Motor neuron (in vitro differentiated cells): ENCODE measurements at regions of chr19 and their contacts with region 1.

Region 1: DNA sequence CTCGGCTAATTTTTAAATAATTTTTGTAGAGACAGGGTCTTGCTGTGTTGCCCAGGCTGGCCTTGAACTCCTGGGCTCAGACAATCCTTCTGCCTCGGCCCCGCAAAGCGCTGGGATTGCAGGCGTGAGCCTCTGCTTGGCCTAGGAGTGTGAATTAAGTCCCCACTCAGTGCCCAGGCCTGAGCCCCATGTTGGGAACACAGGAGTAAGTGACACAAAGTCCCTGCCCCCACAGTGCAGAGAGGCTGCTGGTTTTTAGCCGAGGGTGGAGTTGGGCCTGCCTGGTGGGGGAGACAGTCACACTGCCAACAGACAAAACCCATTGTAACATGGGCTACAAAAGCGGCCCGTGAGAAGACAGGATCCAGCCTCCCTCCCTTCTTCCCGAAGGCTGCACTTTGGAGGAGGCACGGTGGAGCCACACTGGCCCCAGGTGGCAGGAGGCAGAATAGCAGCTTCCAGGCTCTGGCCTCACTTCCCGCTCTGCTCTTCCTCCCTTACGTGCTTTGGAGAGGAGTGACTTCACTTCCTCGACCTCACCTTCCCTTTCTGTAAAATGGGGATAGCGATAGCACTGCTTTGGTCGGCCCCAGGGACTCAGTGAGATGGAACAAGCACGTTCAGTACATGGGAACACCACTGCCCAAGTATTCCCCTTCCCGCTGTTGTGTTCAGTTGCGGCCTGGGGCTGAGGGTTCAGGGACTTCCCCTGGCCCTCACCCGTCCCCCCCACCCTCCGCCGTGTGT is 15.2 kb upstream of the EHD2 start:
- ATAC-seq: peak; percentile 69 to 94 (median 73)
- H3K4me3 ChIP-seq: no peak overlapping the region
- H3K27ac ChIP-seq: peak overlapping the region in 1 of 2 donors; percentile 65
- H3K4me1 ChIP-seq: peaks cover 0 to 6% of the 10 kb centered on the region in 2 donors

Region 2: GRCh38 chr19:47428177-47428894 is 269.7 kb before region 1 on chr19:
- in situ Hi-C with region 1: loop called in 5 of 9 experiments (anchors 10 to 25 kb)
- ATAC-seq: peak; percentile 72 to 89 (median 84)
- H3K4me3 ChIP-seq: peak overlapping the region in 4 of 5 donors; percentile 2 to 24 (median 22)
- H3K27ac ChIP-seq: no peak overlapping the region
- H3K4me1 ChIP-seq: peaks cover 21 to 32% of the 10 kb centered on the region in 2 donors

Region 3: GRCh38 chr19:47436712-47437401 is 261.2 kb before region 1 on chr19:
- in situ Hi-C with region 1: loop called in 5 of 9 experiments (anchors 10 to 25 kb)
- ATAC-seq: peak; percentile 74 to 97 (median 93)
- H3K4me3 ChIP-seq: no peak overlapping the region
- H3K27ac ChIP-seq: no peak overlapping the region
- H3K4me1 ChIP-seq: peaks cover 4 to 5% of the 10 kb centered on the region in 2 donors

Region 4: GRCh38 chr19:47514869-47515588 is 183.0 kb before region 1 on chr19 and contains the start of gene NAPA:
- in situ Hi-C with region 1: loop called in 1 of 9 experiments (anchors 25 kb)
- ATAC-seq: peak; percentile 88 to 97 (median 95)
- H3K4me3 ChIP-seq: peak within 1 kb of the TSS; percentile 50 to 88 (median 83)
- H3K27ac ChIP-seq: peak within 1 kb of the TSS; percentile 91 to 96
- H3K4me1 ChIP-seq: peaks cover 11 to 13% of the 10 kb centered on the region in 2 donors
- total RNA-seq, gene NAPA: 65.3 to 168 (median 103) TPM